ENCODE measurements at regions of chr4 and their contacts with region 1.

Region 1: GRCh38 chr4:123102897-123103471 is 180.6 kb upstream of the NUDT6 start:
- DNase-seq: no peak
- ATAC-seq: peak; percentile 61 to 68
- H3K4me3 ChIP-seq: no peak overlapping the region
- H3K27ac ChIP-seq: no peak overlapping the region
- H3K4me1 ChIP-seq: no peaks in the 10 kb centered on the region
- H3K27me3 ChIP-seq: no peaks in the 10 kb centered on the region

Region 2: GRCh38 chr4:123488916-123489315 is 385.9 kb after region 1 on chr4:
- intact Hi-C with region 1: no loop called
- DNase-seq: no peak
- ATAC-seq: peak in 1 of 2 donors; percentile 64
- H3K4me3 ChIP-seq: no peak overlapping the region
- H3K27ac ChIP-seq: no peak overlapping the region
- H3K4me1 ChIP-seq: no peaks in the 10 kb centered on the region
- H3K27me3 ChIP-seq: no peaks in the 10 kb centered on the region

Region 3: DNA sequence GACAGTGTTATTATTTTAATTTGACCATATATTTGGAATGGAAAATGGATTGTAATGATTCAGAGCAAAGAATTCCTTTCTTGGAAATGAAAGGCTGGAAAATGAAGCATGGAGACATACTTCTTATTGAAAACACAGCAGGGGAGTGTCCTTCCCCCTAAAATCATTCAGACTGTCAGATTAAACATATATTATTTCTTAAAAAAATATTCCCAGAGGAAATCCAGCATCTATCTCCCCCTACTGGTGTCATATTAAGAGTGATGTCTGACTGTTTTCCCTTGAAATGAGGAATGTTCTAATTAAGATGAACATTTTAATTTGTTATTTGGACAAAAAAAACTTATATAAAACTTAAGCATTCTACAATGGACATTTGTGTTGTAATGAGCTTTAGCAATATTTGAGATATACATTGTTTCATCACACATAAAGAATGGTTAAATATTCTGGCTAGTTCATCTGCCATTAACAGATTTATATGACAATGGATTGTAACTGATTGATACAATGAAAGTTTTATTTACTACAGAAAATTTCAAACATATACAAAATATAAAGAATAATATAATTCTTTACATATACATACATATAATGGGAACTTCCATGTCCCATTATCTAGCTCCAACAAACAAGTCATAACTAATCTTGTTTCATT is 558.2 kb after region 1 on chr4:
- intact Hi-C with region 1: loop called in 1 of 4 experiments (anchors 10 kb)
- DNase-seq: no peak
- ATAC-seq: no peak
- H3K4me3 ChIP-seq: no peak overlapping the region
- H3K27ac ChIP-seq: no peak overlapping the region
- H3K4me1 ChIP-seq: no peaks in the 10 kb centered on the region
- H3K27me3 ChIP-seq: no peaks in the 10 kb centered on the region

Region 4: GRCh38 chr4:123966990-123967769 is 864.2 kb after region 1 on chr4:
- intact Hi-C with region 1: no loop called
- DNase-seq: no peak
- ATAC-seq: peak; percentile 68 to 96
- H3K4me3 ChIP-seq: no peak overlapping the region
- H3K27ac ChIP-seq: no peak overlapping the region
- H3K4me1 ChIP-seq: no peaks in the 10 kb centered on the region
- H3K27me3 ChIP-seq: no peaks in the 10 kb centered on the region

Region 5: DNA sequence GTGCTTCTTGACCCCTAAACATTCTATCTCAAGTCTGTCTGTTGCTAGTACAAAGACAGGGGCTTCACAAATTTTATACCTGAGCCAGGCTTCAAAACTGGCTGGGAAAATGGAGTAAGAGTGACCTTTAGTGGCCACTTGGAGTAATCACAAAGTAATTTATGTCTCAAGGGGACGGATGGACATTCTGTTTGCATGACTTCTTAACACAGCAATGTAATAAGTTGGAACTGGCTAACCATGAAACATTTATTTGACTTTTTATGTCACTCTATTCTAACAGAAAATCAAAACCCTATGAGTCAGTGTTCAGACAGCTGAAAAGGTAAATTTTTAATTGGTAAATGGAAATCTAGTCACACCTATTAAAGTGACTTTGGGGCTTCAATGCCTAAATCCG is 1008.9 kb after region 1 on chr4:
- intact Hi-C with region 1: loop called in 1 of 4 experiments (anchors 10 kb)
- DNase-seq: no peak
- ATAC-seq: peak; percentile 84 to 86
- H3K4me3 ChIP-seq: no peak overlapping the region
- H3K27ac ChIP-seq: no peak overlapping the region
- H3K4me1 ChIP-seq: no peaks in the 10 kb centered on the region
- H3K27me3 ChIP-seq: no peaks in the 10 kb centered on the region

Region 6: DNA sequence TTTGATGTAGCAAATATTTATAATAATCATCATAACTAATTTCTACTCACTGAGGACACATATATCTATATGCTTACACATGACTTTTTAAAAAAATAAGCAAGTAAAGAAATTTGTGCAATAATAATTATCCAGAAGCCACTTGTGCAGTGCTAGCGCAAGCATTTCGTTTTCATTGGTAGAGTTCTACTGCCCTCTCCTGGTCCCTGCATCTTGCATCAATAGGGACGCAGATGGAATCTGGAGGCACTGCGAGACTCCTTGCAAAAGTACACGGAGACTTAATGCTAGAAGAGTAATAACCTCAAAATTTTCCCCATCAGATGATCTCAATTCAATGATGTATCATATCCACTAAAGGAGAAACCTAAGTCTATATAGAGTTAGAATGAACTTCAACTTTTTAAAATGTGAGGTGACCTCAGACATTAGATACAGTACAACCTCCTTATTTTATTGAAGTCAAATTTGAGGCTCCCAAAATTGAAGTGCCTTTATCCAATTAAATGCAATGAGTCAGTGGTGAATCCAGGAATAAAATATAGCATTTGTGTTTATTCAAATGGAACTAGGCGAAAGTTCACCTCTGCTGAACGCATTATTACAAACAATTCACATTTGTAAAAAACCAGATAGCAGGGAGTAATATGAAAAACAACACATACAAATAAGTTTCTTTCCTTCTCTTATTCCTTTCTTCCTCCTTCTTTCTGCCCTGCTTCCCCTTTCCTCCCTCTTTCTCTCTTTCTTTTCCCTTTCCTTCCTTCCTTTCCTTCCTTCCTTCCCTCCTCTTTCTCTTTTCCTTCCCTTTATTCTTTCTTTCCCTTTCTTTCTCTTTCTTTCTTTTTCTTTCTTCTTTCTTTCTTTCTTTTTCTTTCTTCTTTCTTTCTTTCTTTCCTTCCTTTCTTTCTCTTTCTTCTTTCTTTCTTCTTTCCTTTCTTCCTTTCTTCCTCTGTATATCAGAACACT is 1159.5 kb after region 1 on chr4:
- intact Hi-C with region 1: loop called in 2 of 4 experiments (anchors 10 kb)
- DNase-seq: peak in 2 of 3 donors; percentile 37 to 65
- ATAC-seq: peak; percentile 88 to 89
- H3K4me3 ChIP-seq: no peak overlapping the region
- H3K27ac ChIP-seq: no peak overlapping the region
- H3K4me1 ChIP-seq: no peaks in the 10 kb centered on the region
- H3K27me3 ChIP-seq: no peaks in the 10 kb centered on the region

Measured in right cardiac atrium (tissue), 5 donors.